Activated CD4-positive, alpha-beta memory T cell treated with anti-CD3 and anti-CD28 coated beads for 36 hours (primary cell): ENCODE measurements at regions of chr6 and their contacts with region 1.

Region 1: DNA sequence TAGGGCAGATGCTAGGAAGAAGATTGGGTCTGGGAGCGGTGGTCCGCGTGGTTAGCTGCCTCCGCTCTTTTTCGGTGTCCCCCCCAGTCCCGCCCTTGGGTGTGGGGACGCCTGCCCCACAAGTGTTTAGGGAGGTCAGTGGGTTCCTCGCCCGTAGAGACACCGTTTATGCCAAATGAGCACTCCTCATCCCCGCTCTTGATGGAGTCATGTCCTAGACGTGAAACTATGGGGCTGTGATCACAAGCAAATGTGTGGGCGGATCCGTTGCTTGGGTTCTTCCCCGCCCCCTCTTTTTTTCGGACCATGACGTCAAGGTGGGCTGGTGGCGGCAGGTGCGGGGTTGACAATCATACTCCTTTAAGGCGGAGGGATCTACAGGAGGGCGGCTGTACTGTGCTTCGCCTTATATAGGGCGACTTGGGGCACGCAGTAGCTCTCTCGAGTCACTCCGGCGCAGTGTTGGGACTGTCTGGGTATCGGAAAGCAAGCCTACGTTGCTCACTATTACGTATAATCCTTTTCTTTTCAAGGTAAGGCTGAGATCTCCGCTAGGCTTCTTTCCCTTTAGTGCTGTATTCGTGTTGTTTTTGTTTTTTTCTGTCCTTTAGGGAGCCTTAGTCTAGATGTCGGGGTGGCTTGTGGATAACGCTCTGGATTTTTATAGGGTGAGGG is at the start of gene HSP90AB1:
- DNase-seq: peak; percentile 99
- H3K4me3 Mint-ChIP-seq: peak within 1 kb of the TSS; percentile 96
- H3K27ac Mint-ChIP-seq: peak within 1 kb of the TSS; percentile 99
- H3K4me1 Mint-ChIP-seq: peaks cover 45% of the 10 kb centered on the region
- H3K27me3 Mint-ChIP-seq: peaks cover 4% of the 10 kb centered on the region
- total RNA-seq, gene HSP90AB1: 1,671 to 1,695 TPM

Region 2: DNA sequence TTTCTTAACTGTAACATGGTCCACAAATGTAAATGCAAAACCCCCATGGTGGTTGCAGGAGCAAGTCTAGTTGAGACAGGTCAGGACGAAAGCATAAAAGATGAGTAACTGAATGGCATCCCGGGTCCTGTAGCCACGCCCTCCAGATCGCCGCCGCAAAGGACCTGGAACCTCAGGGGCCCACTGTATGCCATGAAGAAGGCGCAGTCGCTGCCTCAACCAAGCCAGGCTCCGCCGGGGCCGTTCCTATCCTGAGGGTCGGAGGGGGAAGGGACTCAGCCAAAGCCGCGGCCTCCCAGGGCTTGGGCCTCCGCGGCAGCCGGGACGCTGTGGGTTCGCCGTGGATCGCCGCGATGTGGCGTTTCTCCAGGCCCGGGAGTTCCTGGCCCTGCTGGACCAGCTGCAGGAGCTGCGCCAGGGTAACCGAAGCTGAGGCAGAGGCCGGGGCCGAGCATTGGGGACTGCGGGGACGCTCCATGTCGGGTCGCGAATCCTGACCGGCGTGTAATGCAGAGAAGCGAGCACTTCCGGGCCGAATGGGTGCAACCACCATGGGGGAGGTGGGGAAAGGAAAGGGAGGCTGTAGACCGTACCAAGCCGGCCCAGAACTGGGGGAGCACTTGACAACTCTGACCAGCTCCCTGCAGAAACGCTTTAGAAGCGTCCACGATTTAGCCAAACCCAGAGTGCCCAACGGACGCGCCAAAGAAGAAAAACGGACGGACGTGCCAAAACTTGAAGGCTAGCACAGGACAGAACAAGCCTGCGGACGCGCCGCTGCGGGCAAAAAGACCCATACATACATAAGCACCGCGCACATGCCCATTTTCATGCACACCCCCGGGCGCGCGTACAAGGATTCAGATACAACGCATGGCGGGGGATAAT is 1356.2 kb before region 1 on chr6:
- CTCF ChIA-PET with region 1: no interaction called
- POLR2A ChIA-PET with region 1: no interaction called
- intact Hi-C with region 1: loop called (anchors 2 kb)
- DNase-seq: peak; percentile 96
- H3K4me3 Mint-ChIP-seq: peak overlapping the region; percentile 88
- H3K27ac Mint-ChIP-seq: peak overlapping the region; percentile 94
- H3K4me1 Mint-ChIP-seq: peaks cover 25% of the 10 kb centered on the region
- H3K27me3 Mint-ChIP-seq: no peaks in the 10 kb centered on the region

Region 3: GRCh38 chr6:43635387-43636307 is 611.2 kb before region 1 on chr6 and contains the start of gene MAD2L1BP:
- CTCF ChIA-PET with region 1: no interaction called
- POLR2A ChIA-PET with region 1: interaction called, 3 read pairs
- intact Hi-C with region 1: loop called (anchors 5 kb)
- DNase-seq: peak; percentile 94
- H3K4me3 Mint-ChIP-seq: peak within 1 kb of the TSS; percentile 99
- H3K27ac Mint-ChIP-seq: peak within 1 kb of the TSS; percentile 97
- H3K4me1 Mint-ChIP-seq: peaks cover 45% of the 10 kb centered on the region
- H3K27me3 Mint-ChIP-seq: no peaks in the 10 kb centered on the region
- total RNA-seq, gene MAD2L1BP: 29.1 to 31.6 TPM

Region 4: GRCh38 chr6:44127186-44128019 is 119.4 kb before region 1 on chr6 and contains the starts of genes MRPL14 and TMEM63B:
- CTCF ChIA-PET with region 1: no interaction called
- POLR2A ChIA-PET with region 1: interaction called, 5 read pairs
- intact Hi-C with region 1: loop called (anchors 1 kb)
- DNase-seq: peak; percentile 93
- H3K4me3 Mint-ChIP-seq: peak within 1 kb of the TSS; percentile 92
- H3K27ac Mint-ChIP-seq: peak within 1 kb of the TSS; percentile 97
- H3K4me1 Mint-ChIP-seq: peaks cover 46% of the 10 kb centered on the region
- H3K27me3 Mint-ChIP-seq: no peaks in the 10 kb centered on the region
- total RNA-seq, gene MRPL14: 49.5 to 50.1 TPM
- total RNA-seq, gene TMEM63B: 11.6 to 13.0 TPM

Region 5: GRCh38 chr6:44257025-44257752 is 10.4 kb after region 1 on chr6 and contains the start of gene SLC35B2:
- CTCF ChIA-PET with region 1: interaction called, 49 read pairs
- POLR2A ChIA-PET with region 1: interaction called, 139 read pairs
- intact Hi-C with region 1: loop called (anchors 1 kb)
- DNase-seq: peak; percentile 76
- H3K4me3 Mint-ChIP-seq: peak within 1 kb of the TSS; percentile 77
- H3K27ac Mint-ChIP-seq: peak within 1 kb of the TSS; percentile 83
- H3K4me1 Mint-ChIP-seq: peaks cover 56% of the 10 kb centered on the region
- H3K27me3 Mint-ChIP-seq: no peaks in the 10 kb centered on the region
- total RNA-seq, gene SLC35B2: 16.5 to 16.8 TPM